H1 (cell line): ENCODE measurements at regions of chr19 and their contacts with region 1.

Region 1: DNA sequence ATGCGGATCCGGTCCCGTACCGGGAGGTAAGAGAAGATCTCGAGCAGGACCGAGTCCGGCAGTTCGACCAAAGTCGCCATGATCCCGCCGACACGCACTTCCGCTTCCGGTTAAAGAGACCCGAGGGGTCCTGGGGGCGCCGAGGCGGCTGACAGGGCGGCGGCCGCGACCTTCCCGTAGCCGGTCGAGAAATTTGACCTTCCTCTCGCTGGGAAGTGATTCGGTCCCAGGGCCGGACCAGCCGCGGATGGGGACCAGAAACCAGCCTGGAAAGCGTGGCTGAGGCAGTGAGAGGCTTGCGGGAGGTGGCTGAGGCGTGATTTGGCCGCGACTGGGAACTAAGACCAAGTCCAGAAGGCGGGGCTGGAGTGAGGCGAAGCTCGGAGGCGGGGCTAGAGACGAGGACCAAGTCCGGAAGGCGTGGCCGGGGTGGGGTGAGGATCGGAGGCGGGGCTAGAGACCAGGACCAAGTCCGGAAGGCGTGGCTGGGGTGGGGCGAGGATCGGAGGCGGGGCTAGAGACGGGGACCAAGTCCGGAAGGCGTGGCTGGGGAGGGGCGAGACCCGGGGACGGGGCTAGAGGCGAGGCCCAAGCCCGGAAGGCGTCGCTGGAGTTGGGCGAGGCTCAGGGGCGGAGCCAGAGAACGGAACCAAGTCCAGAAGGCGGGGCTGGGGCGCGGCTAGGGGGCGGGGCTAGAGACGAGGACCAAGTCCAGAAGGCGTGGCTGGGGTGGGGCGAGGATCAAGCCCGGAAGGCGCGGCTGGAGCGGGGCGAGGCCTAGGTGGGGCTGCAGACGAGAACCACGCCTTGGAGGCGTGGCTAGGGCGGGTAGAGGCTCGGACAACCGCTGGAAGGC is at the start of gene FBXL12:
- DNase-seq: peak; percentile 100
- H3K4me3 ChIP-seq: peak within 1 kb of the TSS; percentile 73 to 91 (median 83)
- H3K27ac ChIP-seq: peak within 1 kb of the TSS; percentile 91
- H3K4me1 ChIP-seq: peaks cover 2 to 5% (median 3%) of the 10 kb centered on the region in 4 experiments; a peak in 6 of 7 replicates
- H3K27me3 ChIP-seq: no peaks in the 10 kb centered on the region
- CTCF ChIP-seq: no peak
- EP300 ChIP-seq: no peak
- POLR2A ChIP-seq: peak in 1 of 2 experiments; percentile 92; a peak in 2 of 3 replicates
- RAD21 ChIP-seq: no peak
- total RNA-seq, gene FBXL12: 24.6 and 26.7 TPM in 2 replicates

Region 2: GRCh38 chr19:9741476-9742171 is 77.3 kb before region 1 on chr19:
- CTCF ChIA-PET with region 1: no interaction called
- POLR2A ChIA-PET with region 1: no interaction called
- DNase-seq: no peak
- H3K4me3 ChIP-seq: no peak overlapping the region
- H3K27ac ChIP-seq: no peak overlapping the region
- H3K4me1 ChIP-seq: no peaks in the 10 kb centered on the region
- H3K27me3 ChIP-seq: no peaks in the 10 kb centered on the region
- CTCF ChIP-seq: no peak
- EP300 ChIP-seq: no peak
- POLR2A ChIP-seq: no peak
- RAD21 ChIP-seq: no peak

Region 3: DNA sequence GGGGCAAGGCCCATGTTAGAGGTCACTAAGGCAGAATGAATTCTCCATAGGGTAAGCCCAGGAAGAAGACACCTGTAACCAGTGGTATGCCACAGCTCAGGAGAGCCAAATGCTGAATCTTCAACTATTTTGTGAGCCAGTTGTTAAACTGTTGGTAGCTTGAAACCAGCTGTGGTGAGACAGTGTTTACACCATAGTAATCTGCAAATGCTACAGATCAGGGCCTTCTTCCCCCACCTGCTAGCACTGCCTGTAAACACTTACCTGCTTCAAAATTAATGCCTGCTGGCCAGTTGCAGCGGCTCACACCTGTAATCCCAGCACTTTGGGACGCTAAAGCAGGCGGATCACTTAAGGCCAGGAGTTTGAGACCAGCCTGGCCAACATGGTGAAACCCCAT is 12.2 kb before region 1 on chr19:
- CTCF ChIA-PET with region 1: no interaction called
- POLR2A ChIA-PET with region 1: interaction called, 11 read pairs
- DNase-seq: no peak
- H3K4me3 ChIP-seq: no peak overlapping the region
- H3K27ac ChIP-seq: no peak overlapping the region
- H3K4me1 ChIP-seq: no peaks in the 10 kb centered on the region
- H3K27me3 ChIP-seq: no peaks in the 10 kb centered on the region
- CTCF ChIP-seq: no peak
- EP300 ChIP-seq: no peak
- POLR2A ChIP-seq: no peak
- RAD21 ChIP-seq: no peak

Region 4: GRCh38 chr19:9857920-9858746 is 39.2 kb after region 1 on chr19:
- CTCF ChIA-PET with region 1: no interaction called
- POLR2A ChIA-PET with region 1: no interaction called
- DNase-seq: no peak
- H3K4me3 ChIP-seq: no peak overlapping the region
- H3K27ac ChIP-seq: no peak overlapping the region
- H3K4me1 ChIP-seq: no peaks in the 10 kb centered on the region; a peak in 1 of 7 replicates
- H3K27me3 ChIP-seq: no peaks in the 10 kb centered on the region
- CTCF ChIP-seq: no peak
- EP300 ChIP-seq: no peak
- POLR2A ChIP-seq: no peak
- RAD21 ChIP-seq: no peak